Ascending aorta (tissue), 2 donors: ENCODE measurements at regions of chr10 and their contacts with region 1.

Region 1: DNA sequence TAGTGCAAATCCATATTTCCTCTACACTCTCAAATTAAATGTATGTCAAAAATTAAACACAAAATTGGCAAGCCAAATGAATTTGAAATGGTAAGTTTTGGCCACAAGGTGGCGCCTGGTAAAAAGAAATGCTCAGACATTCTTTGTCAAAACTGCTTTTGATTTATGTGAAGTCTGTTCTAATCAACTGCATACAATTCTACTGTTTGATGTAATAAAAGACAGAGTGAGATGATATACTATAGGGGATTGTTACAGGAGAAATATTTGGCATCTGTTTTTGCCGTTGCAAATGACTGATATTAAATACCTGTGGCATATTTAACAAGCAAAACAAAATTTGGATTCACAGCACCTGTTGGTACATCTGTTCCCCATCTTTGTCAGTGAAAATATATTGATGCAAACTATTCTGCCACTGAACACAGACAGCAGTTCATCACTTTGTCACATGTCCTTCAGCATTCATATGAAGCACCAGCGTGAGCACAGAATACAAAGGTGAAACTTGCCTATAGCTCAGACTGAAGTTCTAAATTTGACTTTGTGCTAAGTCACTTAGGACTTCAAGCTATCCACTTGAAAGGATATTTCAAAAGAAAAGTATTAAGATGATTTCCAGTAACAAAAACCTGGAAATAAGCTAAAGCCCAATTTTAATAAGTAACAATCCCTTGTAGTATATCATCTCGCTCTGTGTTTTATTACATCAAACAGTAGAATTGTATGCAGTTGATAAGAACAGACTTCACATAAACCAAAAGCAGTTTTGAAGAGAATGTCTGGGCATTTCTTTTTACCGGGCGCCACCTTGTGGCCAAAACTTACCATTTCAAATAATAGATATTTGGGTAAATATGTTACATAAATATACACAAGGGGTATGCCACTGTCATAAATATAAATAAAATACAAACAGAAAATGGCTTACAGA is 10.2 kb upstream of the CH25H start:
- DNase-seq: peak in 1 of 2 donors; percentile 76
- H3K4me3 ChIP-seq: peak overlapping the region in 1 of 2 donors; percentile 12
- H3K27ac ChIP-seq: peak overlapping the region; percentile 14 to 58
- H3K4me1 ChIP-seq: peaks cover 0 to 4% of the 10 kb centered on the region in 2 donors
- H3K27me3 ChIP-seq: no peaks in the 10 kb centered on the region
- CTCF ChIP-seq: peak; percentile 37 to 72 (median 70)

Region 2: DNA sequence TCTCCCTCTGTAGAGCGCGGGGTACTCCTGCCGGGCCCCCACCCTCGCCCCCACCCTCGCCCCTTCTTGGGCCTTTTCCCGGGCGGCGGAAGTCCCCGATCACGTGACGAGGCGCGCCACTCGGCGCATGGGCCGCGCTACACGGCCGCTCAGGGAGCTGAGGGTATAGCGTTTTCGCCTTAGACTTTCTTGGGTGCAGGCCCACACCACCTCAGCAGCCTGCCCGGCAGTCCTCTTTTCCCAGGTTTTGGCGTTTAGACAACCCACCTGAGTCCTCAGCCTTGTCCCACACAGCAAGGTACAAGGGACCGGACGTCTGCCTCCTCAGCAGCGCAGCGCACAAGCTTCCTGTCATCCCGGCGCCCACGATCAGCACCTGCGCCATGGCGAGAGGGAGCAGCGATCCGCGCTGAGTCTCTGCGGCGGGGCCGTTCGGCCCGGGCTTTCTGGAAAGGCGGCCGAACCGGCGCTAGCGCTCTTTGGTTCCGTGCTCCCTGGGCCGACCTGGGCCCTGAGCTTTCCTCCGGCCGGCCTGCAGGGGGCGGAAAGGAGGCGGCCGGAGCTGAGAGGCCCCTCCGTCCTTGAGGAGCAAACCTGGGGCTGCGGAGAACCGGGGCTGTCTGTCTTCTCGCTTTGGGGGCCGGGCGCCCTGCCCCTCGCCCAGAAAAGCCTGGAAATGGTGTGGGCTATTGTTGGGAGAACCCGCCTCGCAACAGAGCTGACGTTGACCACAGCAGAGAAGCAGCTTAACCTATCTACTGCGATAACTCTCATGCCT is 634.3 kb before region 1 on chr10 and contains the start of gene RNLS:
- intact Hi-C with region 1: loop called (anchors 10 kb)
- DNase-seq: peak in 1 of 2 donors; percentile 83
- H3K4me3 ChIP-seq: peak within 1 kb of the TSS; percentile 70 to 75
- H3K27ac ChIP-seq: peak within 1 kb of the TSS; percentile 88 to 91
- H3K4me1 ChIP-seq: peaks cover 0 to 6% of the 10 kb centered on the region in 2 donors
- H3K27me3 ChIP-seq: no peaks in the 10 kb centered on the region
- CTCF ChIP-seq: peak; percentile 70 to 95 (median 88)
- total RNA-seq, gene RNLS: 12.1 TPM

Region 3: GRCh38 chr10:88835096-88835909 is 382.0 kb before region 1 on chr10:
- intact Hi-C with region 1: loop called (anchors 5 kb)
- DNase-seq: peak in 1 of 2 donors; percentile 90
- H3K4me3 ChIP-seq: no peak overlapping the region
- H3K27ac ChIP-seq: no peak overlapping the region
- H3K4me1 ChIP-seq: peaks cover 0 to 3% of the 10 kb centered on the region in 2 donors
- H3K27me3 ChIP-seq: no peaks in the 10 kb centered on the region
- CTCF ChIP-seq: peak; percentile 83 to 85 (median 84)

Region 4: GRCh38 chr10:88932539-88933256 is 284.6 kb before region 1 on chr10:
- intact Hi-C with region 1: loop called (anchors 5 kb)
- DNase-seq: peak; percentile 41 to 87
- H3K4me3 ChIP-seq: no peak overlapping the region
- H3K27ac ChIP-seq: peak overlapping the region; percentile 72 to 88
- H3K4me1 ChIP-seq: peaks cover 0 to 7% of the 10 kb centered on the region in 2 donors
- H3K27me3 ChIP-seq: no peaks in the 10 kb centered on the region
- CTCF ChIP-seq: peak; percentile 82 to 90 (median 89)

Region 5: DNA sequence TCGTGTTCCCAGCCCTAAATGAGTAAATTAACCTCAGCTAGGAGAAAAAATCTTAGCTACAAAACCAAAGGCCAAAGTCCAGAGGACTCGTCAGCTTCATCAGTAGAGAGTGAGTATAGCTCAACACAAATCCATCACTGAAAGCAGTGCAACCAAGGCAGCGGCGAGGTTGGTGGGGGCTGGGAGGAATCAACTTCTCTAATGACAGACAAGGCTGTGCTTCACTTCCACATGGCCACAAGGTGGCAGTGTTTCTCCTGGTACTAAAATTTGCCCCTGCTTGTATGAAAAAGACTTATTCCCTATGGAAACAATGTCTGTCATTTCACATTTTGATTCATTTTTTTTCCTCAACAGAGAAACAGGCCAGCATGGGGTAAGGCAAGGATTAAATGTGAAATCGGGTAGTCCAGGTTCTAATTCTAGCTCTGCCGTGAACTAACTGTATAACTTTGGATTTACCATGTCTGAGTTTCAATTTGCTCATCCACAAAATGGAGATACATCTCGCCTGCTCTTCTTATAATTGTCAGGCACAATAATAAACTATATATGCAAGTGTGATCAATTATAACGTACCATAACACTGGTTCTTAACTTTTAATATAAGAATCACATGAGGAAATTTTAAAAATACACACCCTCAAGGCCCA is 187.4 kb before region 1 on chr10:
- intact Hi-C with region 1: loop called (anchors 1 kb)
- DNase-seq: peak; percentile 26 to 83
- H3K4me3 ChIP-seq: no peak overlapping the region
- H3K27ac ChIP-seq: no peak overlapping the region
- H3K4me1 ChIP-seq: no peaks in the 10 kb centered on the region
- H3K27me3 ChIP-seq: no peaks in the 10 kb centered on the region
- CTCF ChIP-seq: peak; percentile 79 to 86 (median 85)

Region 6: GRCh38 chr10:89426230-89426868 is 209.0 kb after region 1 on chr10:
- intact Hi-C with region 1: no loop called
- DNase-seq: no peak
- H3K4me3 ChIP-seq: no peak overlapping the region
- H3K27ac ChIP-seq: no peak overlapping the region
- H3K4me1 ChIP-seq: no peaks in the 10 kb centered on the region
- H3K27me3 ChIP-seq: no peaks in the 10 kb centered on the region
- CTCF ChIP-seq: peak; percentile 75 to 80 (median 79)

Region 7: DNA sequence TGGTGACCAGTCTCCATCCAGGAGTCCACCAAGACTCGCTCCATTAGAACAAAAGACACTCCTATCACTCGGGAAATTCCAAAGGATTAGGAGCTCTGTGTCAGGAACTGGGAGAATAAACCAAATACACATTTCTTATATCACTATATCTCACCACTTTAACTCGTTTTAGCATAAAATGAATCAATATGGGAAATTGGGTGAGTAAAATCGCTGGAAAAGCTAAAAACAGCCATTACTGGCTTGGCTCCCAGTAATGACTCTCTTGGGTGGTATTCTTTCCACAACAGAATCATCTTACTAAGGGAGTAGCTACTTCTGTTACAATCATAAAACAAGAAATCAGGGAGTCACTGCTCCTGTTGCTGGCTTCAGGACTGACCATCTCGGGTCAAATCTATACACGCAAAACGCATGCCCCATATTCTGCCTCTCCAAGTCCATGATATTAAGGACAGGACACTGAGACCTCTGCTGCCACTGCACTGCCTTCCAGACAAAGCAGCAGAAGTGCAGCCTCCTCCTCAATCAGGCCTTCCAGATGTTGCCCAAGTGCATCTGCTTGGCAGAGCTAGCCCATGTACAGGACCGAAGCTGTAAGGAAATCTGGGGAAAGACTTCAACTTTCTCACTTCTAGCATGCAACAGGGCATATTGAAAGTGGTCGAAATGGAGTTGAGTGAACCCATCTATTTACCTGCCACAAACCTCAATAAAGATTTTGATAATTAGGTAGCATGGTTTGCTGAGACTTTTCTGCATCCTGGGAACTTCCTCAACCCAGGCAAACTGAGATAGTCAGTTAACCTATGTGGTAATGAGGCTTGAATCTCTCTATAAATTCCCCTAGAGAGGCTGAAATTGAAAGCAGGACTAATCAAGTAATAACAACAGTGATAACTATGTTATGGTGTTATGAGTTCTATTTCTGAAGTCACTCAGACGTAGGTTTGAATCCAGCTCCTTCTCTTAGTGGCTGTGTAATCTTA is 442.1 kb after region 1 on chr10:
- intact Hi-C with region 1: no loop called
- DNase-seq: no peak
- H3K4me3 ChIP-seq: no peak overlapping the region
- H3K27ac ChIP-seq: no peak overlapping the region
- H3K4me1 ChIP-seq: no peaks in the 10 kb centered on the region
- H3K27me3 ChIP-seq: no peaks in the 10 kb centered on the region
- CTCF ChIP-seq: no peak